PC-9 (cell line): ENCODE measurements at regions of chr1 and their contacts with region 1.

Region 1: GRCh38 chr1:173532237-173532636 is 55.1 kb downstream of the PRDX6 start:
- DNase-seq: no peak
- H3K4me3 ChIP-seq: no peak overlapping the region
- H3K27ac ChIP-seq: no peak overlapping the region
- H3K4me1 ChIP-seq: no peaks in the 10 kb centered on the region
- H3K27me3 ChIP-seq: no peaks in the 10 kb centered on the region
- CTCF ChIP-seq: no peak

Region 2: DNA sequence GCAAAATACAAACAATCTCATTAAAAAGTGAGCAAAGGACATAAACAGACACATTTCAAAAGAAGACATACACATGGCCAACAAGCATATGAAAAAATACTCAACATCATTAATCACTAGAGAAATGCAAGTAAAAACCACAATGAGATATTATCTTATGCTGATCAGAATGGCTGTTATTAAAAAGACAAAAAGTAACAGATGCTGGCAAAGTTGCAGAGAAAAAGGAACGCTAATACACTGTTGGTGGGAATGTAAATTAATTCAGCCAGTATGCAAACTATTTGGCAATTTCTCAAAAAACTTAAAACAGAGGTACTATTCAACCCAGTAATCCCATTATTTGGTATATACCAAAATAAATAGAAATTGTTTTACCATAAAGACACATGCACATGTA is 449.3 kb before region 1 on chr1:
- CTCF ChIA-PET with region 1: no interaction called
- POLR2A ChIA-PET with region 1: no interaction called
- intact Hi-C with region 1: no loop called
- DNase-seq: no peak
- H3K4me3 ChIP-seq: no peak overlapping the region
- H3K27ac ChIP-seq: no peak overlapping the region
- H3K4me1 ChIP-seq: no peaks in the 10 kb centered on the region
- H3K27me3 ChIP-seq: no peaks in the 10 kb centered on the region
- CTCF ChIP-seq: no peak

Region 3: GRCh38 chr1:173648880-173649605 is 116.8 kb after region 1 on chr1:
- CTCF ChIA-PET with region 1: interaction called, 10 read pairs
- POLR2A ChIA-PET with region 1: no interaction called
- intact Hi-C with region 1: no loop called
- DNase-seq: no peak
- H3K4me3 ChIP-seq: no peak overlapping the region
- H3K27ac ChIP-seq: no peak overlapping the region
- H3K4me1 ChIP-seq: peaks cover 5% of the 10 kb centered on the region; the same call in 1 of the 2 replicates
- H3K27me3 ChIP-seq: no peaks in the 10 kb centered on the region
- CTCF ChIP-seq: no peak